Activated CD4-positive, alpha-beta T cell treated with anti-CD3 and anti-CD28 coated beads for 36 hours (primary cell): ENCODE measurements at regions of chr9 and their contacts with region 1.

Region 1: DNA sequence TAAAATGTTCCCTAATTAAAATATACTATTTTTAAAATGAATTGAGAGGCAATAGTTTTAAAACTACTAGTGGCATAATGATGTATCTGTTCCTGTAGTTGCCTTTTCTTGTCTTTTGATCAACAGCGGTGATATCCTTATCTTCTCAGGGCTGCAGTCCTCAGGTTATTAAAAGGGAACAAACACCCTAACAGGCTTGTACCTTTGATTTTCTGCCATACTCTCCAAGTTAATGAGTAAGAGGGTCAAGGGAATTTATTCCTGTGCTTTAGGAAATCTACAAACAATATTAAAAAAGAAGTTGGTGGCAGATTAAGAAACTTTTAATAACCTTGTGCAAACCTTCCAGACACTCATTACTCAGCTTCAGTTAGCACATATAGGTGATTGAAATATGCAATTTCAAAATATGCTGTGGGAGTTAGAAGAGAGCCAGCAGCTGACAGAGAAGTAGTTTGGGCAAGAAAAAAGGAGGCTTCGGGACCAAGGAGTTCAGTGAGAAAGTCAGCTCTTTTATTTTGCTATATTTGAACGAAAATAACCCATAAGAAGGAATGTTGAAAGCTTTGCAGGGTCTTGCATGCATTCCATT is 81.0 kb upstream of the TLE4 start:
- DNase-seq: no peak
- ATAC-seq: no peak
- H3K4me3 Mint-ChIP-seq: no peak overlapping the region
- H3K27ac Mint-ChIP-seq: no peak overlapping the region
- H3K4me1 Mint-ChIP-seq: no peaks in the 10 kb centered on the region
- H3K27me3 Mint-ChIP-seq: no peaks in the 10 kb centered on the region

Region 2: GRCh38 chr9:79279356-79279755 is 211.4 kb before region 1 on chr9:
- CTCF ChIA-PET with region 1: no interaction called
- POLR2A ChIA-PET with region 1: no interaction called
- intact Hi-C with region 1: no loop called
- DNase-seq: no peak
- ATAC-seq: no peak
- H3K4me3 Mint-ChIP-seq: no peak overlapping the region
- H3K27ac Mint-ChIP-seq: no peak overlapping the region
- H3K4me1 Mint-ChIP-seq: no peaks in the 10 kb centered on the region
- H3K27me3 Mint-ChIP-seq: peaks cover 2% of the 10 kb centered on the region

Region 3: GRCh38 chr9:79471580-79472543 is 18.9 kb before region 1 on chr9:
- CTCF ChIA-PET with region 1: interaction called, 3 read pairs
- POLR2A ChIA-PET with region 1: no interaction called
- intact Hi-C with region 1: loop called in 1 of 2 experiments (anchors 2 kb)
- DNase-seq: peak; percentile 43
- ATAC-seq: peak; percentile 36
- H3K4me3 Mint-ChIP-seq: no peak overlapping the region
- H3K27ac Mint-ChIP-seq: no peak overlapping the region
- H3K4me1 Mint-ChIP-seq: peaks cover 12% of the 10 kb centered on the region
- H3K27me3 Mint-ChIP-seq: peaks cover 2% of the 10 kb centered on the region

Region 4: DNA sequence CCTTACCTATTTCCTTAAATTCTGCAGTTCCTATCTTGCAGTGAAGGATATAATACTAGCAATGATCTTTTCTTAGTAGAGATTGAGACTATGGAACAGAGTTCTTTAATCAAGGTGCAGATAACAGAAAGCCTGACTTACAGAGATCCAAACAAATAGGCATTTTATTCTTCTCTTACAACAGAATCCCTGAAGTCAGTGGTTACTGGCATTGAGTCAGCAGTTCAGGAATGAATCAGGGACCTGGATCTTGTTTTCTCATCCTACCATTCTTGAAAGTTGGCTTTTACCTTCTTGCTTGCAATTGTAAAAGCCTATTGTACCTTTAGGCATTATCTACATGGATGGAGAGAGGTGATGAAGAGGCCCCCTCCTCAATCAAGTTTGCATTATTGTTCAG is 33.5 kb after region 1 on chr9:
- CTCF ChIA-PET with region 1: no interaction called
- POLR2A ChIA-PET with region 1: no interaction called
- intact Hi-C with region 1: no loop called
- DNase-seq: no peak
- ATAC-seq: no peak
- H3K4me3 Mint-ChIP-seq: no peak overlapping the region
- H3K27ac Mint-ChIP-seq: no peak overlapping the region
- H3K4me1 Mint-ChIP-seq: peaks cover 2% of the 10 kb centered on the region
- H3K27me3 Mint-ChIP-seq: no peaks in the 10 kb centered on the region